ENCODE measurements at regions of chr10 and their contacts with region 1.

Region 1: DNA sequence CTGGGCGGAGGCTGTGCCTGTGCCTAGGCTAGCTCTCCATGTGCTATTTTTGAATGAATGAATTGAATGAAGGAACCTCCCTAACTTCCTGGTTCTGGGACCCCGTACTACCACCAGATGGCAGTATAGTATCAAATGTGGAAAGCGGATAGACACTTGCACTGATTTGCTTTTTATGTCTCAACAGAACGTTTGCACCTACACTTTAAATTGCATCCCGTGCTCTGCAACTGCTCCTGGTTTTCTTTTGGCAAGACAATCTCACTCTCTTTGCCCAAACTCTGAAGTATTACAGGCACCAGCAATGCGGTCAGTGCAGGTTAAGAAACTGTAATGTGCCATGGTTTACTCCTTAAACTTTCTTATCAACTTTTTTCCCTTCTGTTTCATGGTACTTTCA is 6.5 kb downstream of the FZD8 start:
- DNase-seq: peak; percentile 57
- H3K4me3 ChIP-seq: no peak overlapping the region
- H3K27ac ChIP-seq: no peak overlapping the region
- H3K4me1 ChIP-seq: no peaks in the 10 kb centered on the region
- H3K27me3 ChIP-seq: no peaks in the 10 kb centered on the region
- CTCF ChIP-seq: peak; percentile 75 to 89 (median 88)
- POLR2A ChIP-seq: no peak

Region 2: GRCh38 chr10:36779234-36779846 is 1143.8 kb after region 1 on chr10:
- intact Hi-C with region 1: loop called (anchors 10 kb)
- DNase-seq: peak; percentile 62
- H3K4me3 ChIP-seq: no peak overlapping the region
- H3K27ac ChIP-seq: no peak overlapping the region
- H3K4me1 ChIP-seq: no peaks in the 10 kb centered on the region
- H3K27me3 ChIP-seq: no peaks in the 10 kb centered on the region
- CTCF ChIP-seq: peak; percentile 52 to 75 (median 58)
- POLR2A ChIP-seq: no peak

Measured in testis (tissue), 5 donors.